Activated CD8-positive, alpha-beta memory T cell treated with anti-CD3 and anti-CD28 coated beads, Interleukin-2, amount 10 ng/mL, durations not matched to agents 7 days and 5 days (primary cell): ENCODE measurements at regions of chr1 and their contacts with region 1.

Region 1: DNA sequence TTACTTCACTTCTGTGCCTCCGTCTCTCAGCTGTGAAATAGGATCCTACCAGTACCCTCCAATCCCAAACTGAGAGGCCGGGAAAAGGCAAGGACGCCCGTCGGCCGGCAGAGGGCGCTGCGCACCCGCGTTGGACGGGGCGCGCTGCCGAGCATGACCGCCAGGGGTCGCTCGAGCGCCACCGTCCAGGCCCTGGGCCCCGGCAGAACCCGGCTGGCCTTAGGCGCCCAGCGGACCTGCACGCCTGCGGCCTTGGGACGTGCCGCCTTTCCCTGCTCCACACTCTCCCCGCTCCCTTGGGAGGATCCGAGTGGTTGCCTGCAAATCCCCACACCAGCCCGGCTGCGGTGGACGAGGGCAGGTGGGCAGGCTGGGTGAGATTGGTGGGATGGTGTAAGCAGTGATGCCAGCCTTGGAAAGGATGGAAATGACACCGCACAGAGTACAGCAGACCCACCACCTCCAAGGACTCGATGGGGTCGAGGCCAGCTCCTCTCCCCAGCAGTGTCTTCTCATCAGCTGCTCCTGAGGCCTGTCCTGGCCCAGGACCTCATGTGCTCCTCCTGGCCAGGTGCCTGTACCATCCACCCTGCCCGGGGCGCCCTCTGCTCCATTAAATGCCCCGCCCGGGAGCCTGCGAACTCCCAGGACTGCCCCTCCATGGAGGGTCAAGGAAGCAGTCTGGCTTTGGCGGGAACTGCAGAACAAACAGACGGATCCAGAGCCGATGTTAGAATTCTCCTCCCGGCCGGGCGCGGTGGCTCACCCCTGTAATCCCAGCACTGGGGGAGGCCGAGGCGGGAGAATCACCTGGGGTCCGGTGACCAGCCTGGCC is 47.4 kb upstream of the LBR start:
- DNase-seq: peak; percentile 67
- ATAC-seq: peak; percentile 79
- H3K4me3 Mint-ChIP-seq: no peak overlapping the region
- H3K27ac Mint-ChIP-seq: no peak overlapping the region
- H3K4me1 Mint-ChIP-seq: peaks cover 34% of the 10 kb centered on the region
- H3K27me3 Mint-ChIP-seq: peaks cover 5% of the 10 kb centered on the region

Region 2: GRCh38 chr1:225343624-225344023 is 131.6 kb before region 1 on chr1:
- CTCF ChIA-PET with region 1: no interaction called
- DNase-seq: no peak
- ATAC-seq: no peak
- H3K4me3 Mint-ChIP-seq: no peak overlapping the region
- H3K27ac Mint-ChIP-seq: no peak overlapping the region
- H3K4me1 Mint-ChIP-seq: no peaks in the 10 kb centered on the region
- H3K27me3 Mint-ChIP-seq: peaks cover 32% of the 10 kb centered on the region

Region 3: DNA sequence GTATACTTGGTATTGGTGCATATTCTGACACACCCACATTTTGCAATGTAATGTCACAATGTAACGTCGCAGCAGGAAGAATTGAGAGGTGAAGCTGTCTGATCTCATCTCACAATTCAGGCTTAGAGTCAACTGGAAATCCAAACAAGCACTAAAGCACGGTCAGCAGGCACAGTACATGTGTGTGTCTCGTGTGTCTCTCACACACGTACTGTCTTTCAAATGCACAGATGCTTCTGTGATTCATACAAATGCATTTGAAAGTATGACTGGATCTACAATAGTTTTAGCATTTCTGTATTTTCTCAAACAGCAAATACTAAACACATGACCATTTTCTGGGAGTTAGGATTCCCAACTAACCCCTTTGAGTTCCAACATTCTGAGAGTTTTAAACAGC is 74.2 kb before region 1 on chr1:
- CTCF ChIA-PET with region 1: no interaction called
- DNase-seq: no peak
- ATAC-seq: no peak
- H3K4me3 Mint-ChIP-seq: no peak overlapping the region
- H3K27ac Mint-ChIP-seq: no peak overlapping the region
- H3K4me1 Mint-ChIP-seq: peaks cover 2% of the 10 kb centered on the region
- H3K27me3 Mint-ChIP-seq: no peaks in the 10 kb centered on the region

Region 4: DNA sequence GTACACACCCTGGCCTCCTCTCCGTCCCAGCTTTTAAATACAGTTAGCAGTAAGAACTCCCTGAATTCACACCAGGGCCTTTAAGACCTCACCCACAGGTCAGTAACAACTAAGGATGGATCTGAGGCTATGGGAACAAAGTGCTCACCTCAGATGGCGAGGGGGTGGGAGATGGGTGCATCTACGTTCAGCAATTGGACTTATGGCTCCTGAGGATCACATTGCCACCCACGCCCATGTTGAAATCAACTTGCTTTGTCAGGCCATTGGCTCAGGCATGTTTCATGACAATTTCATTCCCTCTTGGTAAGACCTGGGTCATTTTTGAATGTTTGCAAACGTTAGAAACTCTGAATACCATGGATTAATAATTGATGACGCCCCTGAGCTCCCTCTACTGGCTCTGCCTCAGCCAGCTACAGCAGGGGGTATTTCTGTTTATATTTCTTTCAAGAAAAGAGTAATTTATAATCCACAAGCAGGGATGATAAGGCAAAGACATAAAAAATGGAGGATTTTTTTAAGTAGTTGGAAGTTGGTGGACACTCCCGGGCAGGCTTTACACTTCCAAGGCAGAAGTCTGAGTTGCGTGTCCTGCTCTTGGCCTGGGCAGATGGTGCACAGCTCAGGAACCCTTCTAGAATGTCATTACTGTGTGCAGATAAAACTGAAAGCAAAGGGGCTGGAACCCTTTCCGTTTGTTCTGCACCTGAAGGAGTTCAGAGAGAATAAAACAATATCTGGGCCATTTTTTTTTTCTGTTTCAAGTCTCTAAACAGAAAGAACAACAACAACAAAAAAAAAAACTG is 33.7 kb before region 1 on chr1:
- CTCF ChIA-PET with region 1: interaction called, 13 read pairs
- DNase-seq: no peak
- ATAC-seq: no peak
- H3K4me3 Mint-ChIP-seq: no peak overlapping the region
- H3K27ac Mint-ChIP-seq: peak overlapping the region; percentile 82
- H3K4me1 Mint-ChIP-seq: peaks cover 50% of the 10 kb centered on the region
- H3K27me3 Mint-ChIP-seq: no peaks in the 10 kb centered on the region

Region 5: DNA sequence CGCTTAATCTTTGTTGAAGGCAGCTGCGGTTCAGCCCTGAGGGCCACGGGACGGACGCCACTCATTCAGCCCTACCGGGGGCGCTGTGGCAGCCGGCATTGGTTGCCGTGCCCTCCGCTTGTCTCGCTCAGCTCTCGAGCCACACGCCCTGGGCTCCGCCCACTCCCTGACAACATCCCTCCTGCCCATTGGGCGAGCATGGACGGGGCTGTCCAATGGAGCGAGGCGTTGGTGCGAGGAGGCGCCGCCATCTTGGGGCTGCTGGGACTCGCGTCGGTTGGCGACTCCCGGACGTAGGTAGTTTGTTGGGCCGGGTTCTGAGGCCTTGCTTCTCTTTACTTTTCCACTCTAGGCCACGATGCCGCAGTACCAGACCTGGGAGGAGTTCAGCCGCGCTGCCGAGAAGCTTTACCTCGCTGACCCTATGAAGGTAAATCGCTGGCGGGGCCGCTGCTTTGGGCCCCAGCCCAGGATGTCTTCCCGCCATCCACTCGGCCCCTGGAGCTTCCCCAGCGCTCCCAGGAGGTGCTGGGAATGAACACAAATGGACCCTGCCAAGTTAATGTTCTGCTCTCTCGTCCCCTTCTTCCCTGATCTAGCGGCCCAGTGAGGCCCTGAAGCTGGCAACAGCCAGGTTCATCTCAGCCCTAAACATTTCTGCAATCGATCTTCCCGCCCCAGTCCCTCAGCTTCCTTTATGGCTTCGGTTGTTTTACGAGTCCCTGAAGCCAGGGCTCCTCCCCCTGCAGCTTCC is 302.6 kb after region 1 on chr1 and contains the start of gene SRP9:
- CTCF ChIA-PET with region 1: interaction called, 14 read pairs
- DNase-seq: peak; percentile 100
- ATAC-seq: peak; percentile 99
- H3K4me3 Mint-ChIP-seq: no peak within 1 kb of the TSS
- H3K27ac Mint-ChIP-seq: no peak within 1 kb of the TSS
- H3K4me1 Mint-ChIP-seq: peaks cover 29% of the 10 kb centered on the region
- H3K27me3 Mint-ChIP-seq: no peaks in the 10 kb centered on the region
- total RNA-seq, gene SRP9: 198 to 225 TPM

Region 6: GRCh38 chr1:225911191-225912130 is 436.3 kb after region 1 on chr1:
- CTCF ChIA-PET with region 1: interaction called, 39 read pairs
- DNase-seq: peak; percentile 74
- ATAC-seq: peak; percentile 93
- H3K4me3 Mint-ChIP-seq: no peak overlapping the region
- H3K27ac Mint-ChIP-seq: no peak overlapping the region
- H3K4me1 Mint-ChIP-seq: no peaks in the 10 kb centered on the region
- H3K27me3 Mint-ChIP-seq: no peaks in the 10 kb centered on the region

Region 7: DNA sequence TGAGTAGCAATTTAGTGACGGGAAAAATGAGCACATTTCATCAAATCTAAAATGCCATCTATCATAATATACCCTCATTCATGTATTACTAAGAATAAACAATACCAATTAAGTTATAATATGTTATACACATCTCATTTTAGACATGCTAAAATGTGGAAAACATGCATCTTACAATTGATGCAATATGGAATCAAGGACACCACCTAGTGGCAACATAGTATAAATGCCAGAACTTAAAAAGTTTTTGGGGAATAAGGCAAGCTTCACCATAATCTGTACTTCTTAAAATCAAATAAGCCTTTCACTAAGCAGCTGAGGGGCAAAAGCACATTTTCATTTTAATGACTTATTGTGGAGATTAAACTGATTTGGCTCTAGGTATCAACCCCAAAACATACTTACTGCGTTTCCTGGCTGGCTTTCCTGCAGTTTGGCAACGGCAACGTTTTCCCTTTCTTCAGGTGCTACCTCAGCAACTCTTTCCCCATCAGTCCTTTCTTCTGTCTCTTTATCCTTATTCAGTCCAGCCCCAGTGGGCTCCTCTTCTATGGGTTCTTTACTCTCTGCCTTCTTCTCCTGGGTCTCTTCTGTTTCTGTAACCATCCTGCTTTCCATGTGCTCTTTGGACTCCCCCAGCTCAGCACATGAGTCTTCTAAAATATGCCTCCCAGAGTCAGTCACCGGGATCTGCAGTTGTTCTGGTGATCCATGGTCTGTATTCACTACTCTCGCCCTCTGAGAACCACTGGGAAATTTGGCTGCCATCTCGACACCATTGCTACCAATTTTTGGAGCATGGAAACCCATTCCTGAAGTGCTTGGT is 512.5 kb after region 1 on chr1:
- CTCF ChIA-PET with region 1: interaction called, 15 read pairs
- DNase-seq: no peak
- ATAC-seq: no peak
- H3K4me3 Mint-ChIP-seq: no peak overlapping the region
- H3K27ac Mint-ChIP-seq: no peak overlapping the region
- H3K4me1 Mint-ChIP-seq: peaks cover 32% of the 10 kb centered on the region
- H3K27me3 Mint-ChIP-seq: no peaks in the 10 kb centered on the region